GM12878 (cell line): ENCODE measurements at regions of chr19 and their contacts with region 1.

Region 1: GRCh38 chr19:28014615-28015405 is 1198.1 kb downstream of the UQCRFS1 start:
- DNase-seq: no peak
- ATAC-seq: no peak; the same call in 2 of the 3 replicates
- H3K4me3 ChIP-seq: no peak overlapping the region
- H3K27ac ChIP-seq: no peak overlapping the region
- H3K4me1 ChIP-seq: no peaks in the 10 kb centered on the region; the same call in 1 of the 2 replicates
- H3K27me3 ChIP-seq: no peaks in the 10 kb centered on the region
- CTCF ChIP-seq: no peak
- EP300 ChIP-seq: no peak
- POLR2A ChIP-seq: no peak
- RAD21 ChIP-seq: no peak

Region 2: GRCh38 chr19:27986299-27986698 is 28.5 kb before region 1 on chr19:
- CTCF ChIA-PET with region 1: interaction called, 16 read pairs
- POLR2A ChIA-PET with region 1: no interaction called
- RAD21 ChIA-PET with region 1: interaction called, 8 read pairs
- SMC1A ChIA-PET with region 1: interaction called, 18 read pairs
- in situ Hi-C with region 1: no loop called
- intact Hi-C with region 1: no loop called
- DNase-seq: no peak
- ATAC-seq: no peak
- H3K4me3 ChIP-seq: no peak overlapping the region
- H3K27ac ChIP-seq: no peak overlapping the region
- H3K4me1 ChIP-seq: no peaks in the 10 kb centered on the region
- H3K27me3 ChIP-seq: no peaks in the 10 kb centered on the region
- CTCF ChIP-seq: no peak
- EP300 ChIP-seq: no peak
- POLR2A ChIP-seq: no peak
- RAD21 ChIP-seq: no peak